OCI-LY7 (cell line): ENCODE measurements at regions of chr17 and their contacts with region 1.

Region 1: GRCh38 chr17:64420143-64420971 is 28.6 kb upstream of the MILR1 start:
- DNase-seq: peak; percentile 87
- H3K4me3 ChIP-seq: no peak overlapping the region
- H3K27ac ChIP-seq: no peak overlapping the region
- H3K4me1 ChIP-seq: no peaks in the 10 kb centered on the region
- CTCF ChIP-seq: peak; percentile 93

Region 2: GRCh38 chr17:64306850-64307463 is 113.4 kb before region 1 on chr17:
- CTCF ChIA-PET with region 1: interaction called, 6 read pairs
- POLR2A ChIA-PET with region 1: interaction called, 3 read pairs
- intact Hi-C with region 1: loop called (anchors 1 kb)
- DNase-seq: peak; percentile 81
- H3K4me3 ChIP-seq: no peak overlapping the region
- H3K27ac ChIP-seq: no peak overlapping the region
- H3K4me1 ChIP-seq: no peaks in the 10 kb centered on the region
- CTCF ChIP-seq: peak; percentile 97

Region 3: DNA sequence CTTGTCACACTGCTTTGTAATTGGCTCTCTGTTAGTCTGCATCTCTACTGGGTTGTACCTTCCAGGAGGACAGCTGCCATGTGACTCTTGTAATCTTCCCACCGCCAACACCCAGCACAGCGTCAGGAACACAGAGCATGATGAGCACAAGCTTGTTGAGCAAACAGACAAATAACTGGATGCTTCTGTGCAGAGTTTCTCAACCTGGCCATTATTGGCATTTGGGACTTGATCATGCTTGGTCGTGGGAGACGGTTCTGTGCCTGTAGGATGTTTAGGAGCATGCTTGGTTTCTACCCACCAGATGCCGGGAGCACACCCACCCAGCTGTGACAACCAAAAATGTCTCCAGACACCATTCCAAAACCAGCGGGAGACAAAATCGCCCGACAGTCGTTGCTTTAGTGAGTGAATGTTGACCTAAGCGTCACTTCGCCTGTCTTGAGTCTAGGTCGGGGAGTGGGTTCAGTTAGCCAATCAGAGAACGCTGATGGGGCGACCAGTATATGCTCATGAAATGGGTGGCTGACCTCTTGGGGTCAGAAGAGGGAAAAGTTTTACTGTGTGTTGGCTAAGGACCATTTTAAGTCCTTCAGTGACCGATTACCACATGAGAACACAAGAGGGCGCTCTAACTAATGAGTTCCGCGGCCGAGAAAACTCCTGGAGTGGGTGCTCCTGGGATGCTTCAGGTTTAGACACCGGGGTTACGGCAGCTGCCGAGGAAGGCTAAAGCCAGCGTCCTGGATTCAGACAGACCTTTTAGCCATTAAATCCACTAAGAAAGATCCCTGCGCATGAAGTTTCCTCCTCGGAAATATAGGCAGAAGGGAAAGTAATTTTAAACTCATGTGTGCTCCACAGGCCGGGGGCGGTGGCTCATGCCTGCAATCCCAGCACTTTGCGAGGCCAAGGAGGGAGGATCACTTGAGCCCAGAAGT is 99.5 kb before region 1 on chr17:
- CTCF ChIA-PET with region 1: interaction called, 3 read pairs
- POLR2A ChIA-PET with region 1: interaction called, 3 read pairs
- intact Hi-C with region 1: loop called (anchors 1 kb)
- DNase-seq: peak; percentile 82
- H3K4me3 ChIP-seq: no peak overlapping the region
- H3K27ac ChIP-seq: no peak overlapping the region
- H3K4me1 ChIP-seq: peaks cover 17% of the 10 kb centered on the region
- CTCF ChIP-seq: peak; percentile 97

Region 4: GRCh38 chr17:64491034-64491859 is 70.9 kb after region 1 on chr17:
- CTCF ChIA-PET with region 1: interaction called, 8 read pairs
- POLR2A ChIA-PET with region 1: interaction called, 7 read pairs
- intact Hi-C with region 1: loop called (anchors 1 kb)
- DNase-seq: peak; percentile 52
- H3K4me3 ChIP-seq: no peak overlapping the region
- H3K27ac ChIP-seq: no peak overlapping the region
- H3K4me1 ChIP-seq: peaks cover 14% of the 10 kb centered on the region
- CTCF ChIP-seq: peak; percentile 81

Region 5: DNA sequence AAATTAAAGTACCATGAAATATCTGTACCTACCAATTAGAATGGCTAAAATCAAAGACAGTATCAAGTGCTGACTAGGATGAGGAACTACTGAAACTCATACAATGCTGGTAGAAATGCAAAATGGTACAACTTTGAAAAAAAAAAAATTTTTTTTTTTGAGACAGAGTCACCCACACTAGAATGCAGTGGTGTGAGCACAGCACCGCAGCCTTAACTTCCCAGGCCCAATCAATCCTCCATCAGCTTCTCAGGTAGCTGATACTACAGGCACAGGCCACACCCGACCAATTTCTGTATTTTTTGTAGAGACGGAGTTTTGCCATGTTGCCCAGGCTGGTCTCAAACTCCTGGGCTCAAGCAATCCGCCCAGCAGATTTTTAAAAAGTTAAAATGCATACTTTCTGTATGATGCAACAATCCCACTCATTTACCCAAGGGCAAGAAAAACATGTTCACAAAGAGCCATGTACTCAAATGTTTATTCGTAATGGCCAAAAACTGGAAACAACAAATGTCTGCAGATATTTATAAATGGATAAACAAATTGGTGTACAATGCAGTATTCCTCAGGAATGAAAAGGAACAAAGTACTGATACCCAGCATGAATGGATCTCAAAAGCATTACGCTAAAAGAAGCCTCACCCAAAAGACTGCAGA is 233.1 kb after region 1 on chr17:
- CTCF ChIA-PET with region 1: no interaction called
- POLR2A ChIA-PET with region 1: no interaction called
- intact Hi-C with region 1: loop called (anchors 1 kb)
- DNase-seq: no peak
- H3K4me3 ChIP-seq: no peak overlapping the region
- H3K27ac ChIP-seq: no peak overlapping the region
- H3K4me1 ChIP-seq: peaks cover 8% of the 10 kb centered on the region
- CTCF ChIP-seq: no peak

Region 6: GRCh38 chr17:64736804-64737492 is 316.6 kb after region 1 on chr17:
- CTCF ChIA-PET with region 1: no interaction called
- POLR2A ChIA-PET with region 1: interaction called, 5 read pairs
- intact Hi-C with region 1: loop called (anchors 10 kb)
- DNase-seq: peak; percentile 38
- H3K4me3 ChIP-seq: no peak overlapping the region
- H3K27ac ChIP-seq: no peak overlapping the region
- H3K4me1 ChIP-seq: peaks cover 9% of the 10 kb centered on the region
- CTCF ChIP-seq: peak; percentile 82